Heart right ventricle (tissue), 16 donors: ENCODE measurements at regions of chr1 and their contacts with region 1.

Region 1: GRCh38 chr1:224434691-224435317 is at the start of gene WDR26:
- DNase-seq: peak; percentile 74 to 82
- ATAC-seq: peak; percentile 77 to 88 (median 86)
- H3K4me3 ChIP-seq: peak within 1 kb of the TSS; percentile 84 to 97 (median 88)
- H3K27ac ChIP-seq: peak within 1 kb of the TSS; percentile 92 to 98 (median 97)
- H3K4me1 ChIP-seq: peaks cover 17 to 52% (median 43%) of the 10 kb centered on the region in 9 donors
- H3K27me3 ChIP-seq: no peaks in the 10 kb centered on the region
- CTCF ChIP-seq: peak in 2 of 9 donors; percentile 26 to 31
- total RNA-seq, gene WDR26: 58.9 to 81.3 (median 71.8) TPM

Region 2: GRCh38 chr1:224182866-224183590 is 251.8 kb before region 1 on chr1 and contains the start of gene DEGS1:
- intact Hi-C with region 1: loop called in 1 of 10 experiments (anchors 10 kb)
- DNase-seq: peak; percentile 77 to 83
- ATAC-seq: peak; percentile 93 to 97 (median 94)
- H3K4me3 ChIP-seq: peak within 1 kb of the TSS; percentile 76 to 100 (median 92)
- H3K27ac ChIP-seq: peak within 1 kb of the TSS; percentile 82 to 99 (median 96)
- H3K4me1 ChIP-seq: peaks cover 3 to 42% (median 24%) of the 10 kb centered on the region in 9 donors
- H3K27me3 ChIP-seq: no peaks in the 10 kb centered on the region
- CTCF ChIP-seq: no peak
- total RNA-seq, gene DEGS1: 33.1 to 79.4 (median 35.7) TPM

Region 3: GRCh38 chr1:224387302-224387912 is 47.4 kb before region 1 on chr1:
- intact Hi-C with region 1: loop called in 1 of 10 experiments (anchors 5 kb)
- DNase-seq: no peak
- ATAC-seq: no peak
- H3K4me3 ChIP-seq: no peak overlapping the region
- H3K27ac ChIP-seq: peak overlapping the region in 2 of 10 donors; percentile 1 to 25
- H3K4me1 ChIP-seq: peaks cover 0 to 31% (median 0%) of the 10 kb centered on the region in 9 donors
- H3K27me3 ChIP-seq: no peaks in the 10 kb centered on the region
- CTCF ChIP-seq: no peak

Region 4: DNA sequence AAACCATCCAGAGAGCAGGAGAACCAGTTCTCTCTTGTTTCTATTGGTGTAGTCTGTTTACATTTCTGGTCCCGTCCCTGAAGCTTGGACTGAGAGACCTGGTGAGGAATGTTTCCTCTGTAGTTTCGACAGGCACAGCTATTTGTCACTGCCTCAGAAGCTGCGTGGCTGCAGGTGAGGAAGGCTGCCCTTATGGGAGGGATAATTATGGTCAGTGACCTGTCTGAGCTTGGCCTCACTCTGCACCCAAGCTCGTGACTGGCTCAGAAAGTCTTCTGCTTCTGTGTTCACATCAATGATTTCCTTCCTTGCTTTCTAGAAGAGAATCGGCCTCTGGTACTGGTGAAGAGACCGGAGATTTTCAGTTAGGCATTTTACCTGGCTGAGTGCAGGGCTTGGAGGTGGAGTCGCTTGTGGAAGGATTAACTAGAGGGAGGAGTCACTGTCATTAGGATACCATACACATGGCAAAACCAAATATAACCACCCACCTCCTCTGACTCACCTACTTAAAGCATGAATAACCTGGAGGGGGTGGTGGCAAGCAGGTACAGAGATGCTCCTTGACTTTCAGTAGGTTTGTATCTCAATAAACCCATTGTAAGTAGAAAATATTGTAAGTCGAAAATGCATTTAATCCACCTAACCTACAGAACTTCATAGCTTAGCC is 19.7 kb after region 1 on chr1:
- intact Hi-C with region 1: loop called in 1 of 10 experiments (anchors 1 kb)
- DNase-seq: no peak
- ATAC-seq: no peak
- H3K4me3 ChIP-seq: no peak overlapping the region
- H3K27ac ChIP-seq: no peak overlapping the region
- H3K4me1 ChIP-seq: peaks cover 0 to 32% (median 14%) of the 10 kb centered on the region in 9 donors
- H3K27me3 ChIP-seq: no peaks in the 10 kb centered on the region
- CTCF ChIP-seq: no peak